CD8-positive, alpha-beta memory T cell (primary cell): ENCODE measurements at regions of chr5 and their contacts with region 1.

Region 1: GRCh38 chr5:137660349-137660817 is 75.5 kb downstream of the KLHL3 start:
- DNase-seq: peak; percentile 46 to 76 (median 47)
- H3K4me3 ChIP-seq: no peak overlapping the region
- H3K4me3 Mint-ChIP-seq: no peak overlapping the region
- H3K27ac ChIP-seq: no peak overlapping the region
- H3K27ac Mint-ChIP-seq: no peak overlapping the region
- H3K4me1 ChIP-seq: no peaks in the 10 kb centered on the region
- H3K4me1 Mint-ChIP-seq: peaks cover 3 to 7% (median 7%) of the 10 kb centered on the region in 3 donors
- H3K27me3 ChIP-seq: no peaks in the 10 kb centered on the region
- H3K27me3 Mint-ChIP-seq: no peaks in the 10 kb centered on the region

Region 2: GRCh38 chr5:137375741-137376526 is 284.4 kb before region 1 on chr5:
- CTCF ChIA-PET with region 1: no interaction called
- POLR2A ChIA-PET with region 1: no interaction called
- DNase-seq: no peak
- H3K4me3 ChIP-seq: no peak overlapping the region
- H3K4me3 Mint-ChIP-seq: no peak overlapping the region
- H3K27ac ChIP-seq: no peak overlapping the region
- H3K27ac Mint-ChIP-seq: no peak overlapping the region
- H3K4me1 ChIP-seq: no peaks in the 10 kb centered on the region
- H3K4me1 Mint-ChIP-seq: no peaks in the 10 kb centered on the region
- H3K27me3 ChIP-seq: no peaks in the 10 kb centered on the region
- H3K27me3 Mint-ChIP-seq: peaks cover 8 to 10% of the 10 kb centered on the region in 2 donors

Region 3: DNA sequence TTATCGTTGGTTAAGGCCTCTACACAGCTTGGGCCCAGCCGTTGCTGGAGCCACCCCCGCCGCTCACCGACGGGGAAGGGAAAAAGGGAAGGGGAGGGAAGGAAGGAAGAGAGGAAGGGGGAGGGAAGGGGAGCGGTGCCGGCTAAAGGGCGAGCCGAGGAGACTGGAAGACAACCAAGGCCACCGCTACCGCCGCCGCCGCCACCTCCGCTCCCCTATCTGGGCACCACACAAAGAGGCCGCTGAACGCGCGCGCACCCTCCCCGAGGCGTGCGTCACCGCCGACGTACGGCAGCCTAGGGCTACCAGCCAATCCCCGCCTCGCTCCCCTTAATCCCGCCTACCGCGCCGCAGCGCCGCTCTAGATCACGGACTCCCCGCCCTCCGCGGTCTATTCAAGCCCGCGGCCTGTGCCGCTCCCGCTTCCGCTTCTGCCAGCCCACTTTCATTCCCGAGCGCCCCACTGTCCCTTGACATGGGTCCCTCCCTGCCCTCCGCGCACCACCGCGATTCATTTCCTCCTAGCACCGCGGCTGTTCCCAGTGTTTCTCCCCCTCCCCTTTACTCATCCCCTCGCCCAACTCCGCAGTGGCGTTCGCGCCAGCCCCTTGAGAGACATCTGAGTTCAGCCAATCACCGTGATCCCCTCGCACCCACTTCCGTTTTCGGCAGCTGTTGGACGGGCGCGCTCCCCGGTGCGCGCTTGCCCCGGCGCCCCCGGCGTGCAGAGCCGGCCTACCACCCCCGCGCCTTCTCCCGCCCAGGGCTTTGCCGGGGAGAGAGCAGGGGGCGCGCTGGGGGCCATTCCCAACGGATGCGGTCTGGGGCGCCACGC is 94.0 kb after region 1 on chr5 and contains the start of gene HNRNPA0:
- CTCF ChIA-PET with region 1: interaction called, 11 read pairs
- POLR2A ChIA-PET with region 1: interaction called, 6 read pairs
- DNase-seq: peak; percentile 95 to 99 (median 98)
- H3K4me3 ChIP-seq: peak within 1 kb of the TSS; percentile 98
- H3K4me3 Mint-ChIP-seq: peak within 1 kb of the TSS; percentile 97 to 100 (median 99)
- H3K27ac ChIP-seq: peak within 1 kb of the TSS; percentile 100
- H3K27ac Mint-ChIP-seq: peak within 1 kb of the TSS; percentile 99 to 100 (median 100)
- H3K4me1 ChIP-seq: peaks cover 29% of the 10 kb centered on the region
- H3K4me1 Mint-ChIP-seq: peaks cover 31 to 41% (median 38%) of the 10 kb centered on the region in 3 donors
- H3K27me3 ChIP-seq: no peaks in the 10 kb centered on the region
- H3K27me3 Mint-ChIP-seq: peaks cover 4 to 10% of the 10 kb centered on the region in 2 donors
- total RNA-seq, gene HNRNPA0: 42.7 to 45.9 TPM